B cell (primary cell): ENCODE measurements at regions of chr7 and their contacts with region 1.

Region 1: GRCh38 chr7:24819916-24820689 is 62.8 kb upstream of the GSDME start:
- DNase-seq: peak; percentile 88
- ATAC-seq: peak; percentile 56
- H3K4me3 ChIP-seq: peak overlapping the region in 1 of 5 experiments; percentile 17
- H3K4me3 Mint-ChIP-seq: peak overlapping the region; percentile 83
- H3K27ac ChIP-seq: peak overlapping the region; percentile 76 to 83
- H3K27ac Mint-ChIP-seq: peak overlapping the region; percentile 94
- H3K4me1 ChIP-seq: peaks cover 27% of the 10 kb centered on the region in 2 donors
- H3K4me1 Mint-ChIP-seq: peaks cover 40% of the 10 kb centered on the region
- H3K27me3 ChIP-seq: no peaks in the 10 kb centered on the region
- H3K27me3 Mint-ChIP-seq: no peaks in the 10 kb centered on the region
- CTCF ChIP-seq: peak; percentile 93

Region 2: DNA sequence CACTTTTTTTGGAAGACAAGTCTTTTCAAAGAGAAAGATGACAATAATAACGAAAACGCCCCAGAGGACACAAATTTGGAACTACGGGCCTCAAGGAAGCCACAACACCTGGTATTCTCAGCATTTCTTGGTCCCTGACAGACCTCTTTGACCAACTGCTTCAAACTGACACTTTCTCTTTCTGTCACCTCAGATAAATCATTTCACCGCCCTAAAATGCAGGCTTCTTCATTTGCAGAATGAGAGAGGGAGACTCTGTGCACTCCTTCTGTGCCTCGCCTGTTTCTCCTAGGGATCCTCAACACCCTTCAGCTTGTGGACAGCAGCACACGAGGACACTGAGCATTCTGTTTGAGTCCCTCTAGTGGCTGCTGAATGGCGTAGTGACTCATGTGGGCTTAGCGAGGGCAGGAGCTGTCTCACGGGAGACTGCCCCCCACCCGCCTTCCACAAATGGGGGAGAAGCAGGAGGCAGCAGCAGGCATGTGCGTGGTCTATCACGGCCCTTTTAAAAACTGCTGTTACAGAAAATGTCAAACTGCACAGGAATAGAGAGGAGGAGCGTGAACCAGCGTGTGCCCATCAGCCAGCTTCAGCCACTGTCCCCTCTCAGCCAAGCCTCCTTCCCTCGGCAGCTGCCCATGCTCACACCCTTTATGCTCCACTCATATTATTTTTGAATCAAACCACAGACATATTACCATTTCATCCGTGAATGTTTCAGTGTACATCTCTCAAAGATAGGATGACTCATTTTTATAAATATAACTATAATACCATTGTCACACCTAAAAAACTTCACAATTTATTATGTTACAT is 104.2 kb before region 1 on chr7:
- CTCF ChIA-PET with region 1: no interaction called
- POLR2A ChIA-PET with region 1: interaction called, 7 read pairs
- intact Hi-C with region 1: loop called (anchors 1 kb)
- DNase-seq: peak; percentile 56
- ATAC-seq: no peak
- H3K4me3 ChIP-seq: peak overlapping the region in 1 of 5 experiments; percentile 9
- H3K4me3 Mint-ChIP-seq: peak overlapping the region; percentile 68
- H3K27ac ChIP-seq: no peak overlapping the region
- H3K27ac Mint-ChIP-seq: no peak overlapping the region
- H3K4me1 ChIP-seq: peaks cover 52 to 55% of the 10 kb centered on the region in 2 donors
- H3K4me1 Mint-ChIP-seq: peaks cover 61% of the 10 kb centered on the region
- H3K27me3 ChIP-seq: no peaks in the 10 kb centered on the region
- H3K27me3 Mint-ChIP-seq: no peaks in the 10 kb centered on the region
- CTCF ChIP-seq: peak; percentile 56

Region 3: DNA sequence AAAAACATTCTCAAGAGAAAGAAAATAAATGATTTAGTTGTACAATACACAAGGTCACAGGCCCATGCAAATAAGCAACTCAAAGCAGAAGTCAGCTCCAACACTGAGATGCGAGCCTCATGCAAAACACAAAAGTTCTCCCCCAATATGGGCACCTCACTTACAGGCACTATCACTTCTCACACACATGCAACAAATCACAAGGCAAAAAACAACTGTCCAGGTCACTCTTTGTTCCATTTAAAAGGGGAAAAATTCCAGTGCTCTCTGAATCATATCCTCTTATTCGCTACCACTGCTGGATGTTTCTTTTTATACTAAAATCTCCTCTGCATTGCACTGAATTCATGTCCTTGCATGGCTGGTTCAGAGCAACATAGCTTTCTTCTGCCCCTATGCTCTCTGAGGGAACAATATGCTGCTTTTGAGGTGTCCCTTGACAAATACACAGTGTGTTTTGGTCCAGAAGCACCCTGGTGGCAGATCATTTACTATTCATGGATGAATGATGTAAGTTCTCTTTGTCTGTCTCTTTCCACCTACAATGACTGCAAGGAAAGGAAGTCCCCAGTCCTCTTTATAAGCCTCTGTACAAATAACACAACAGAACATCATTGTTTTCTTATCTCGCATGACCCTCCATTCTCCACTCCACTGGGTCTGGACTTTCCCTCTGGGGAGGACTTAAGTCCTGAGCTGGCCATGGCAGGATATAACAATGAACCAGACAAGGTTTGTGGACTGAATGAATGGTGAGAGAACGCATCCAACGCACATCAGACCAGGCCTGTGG is 22.5 kb after region 1 on chr7:
- CTCF ChIA-PET with region 1: interaction called, 129 read pairs
- POLR2A ChIA-PET with region 1: interaction called, 17 read pairs
- intact Hi-C with region 1: no loop called
- DNase-seq: peak; percentile 72
- ATAC-seq: peak; percentile 78
- H3K4me3 ChIP-seq: peak overlapping the region in 1 of 5 experiments; percentile 15
- H3K4me3 Mint-ChIP-seq: peak overlapping the region; percentile 59
- H3K27ac ChIP-seq: peak overlapping the region; percentile 68 to 90
- H3K27ac Mint-ChIP-seq: peak overlapping the region; percentile 85
- H3K4me1 ChIP-seq: peaks cover 55 to 58% of the 10 kb centered on the region in 2 donors
- H3K4me1 Mint-ChIP-seq: peaks cover 53% of the 10 kb centered on the region
- H3K27me3 ChIP-seq: no peaks in the 10 kb centered on the region
- H3K27me3 Mint-ChIP-seq: no peaks in the 10 kb centered on the region
- CTCF ChIP-seq: no peak

Region 4: DNA sequence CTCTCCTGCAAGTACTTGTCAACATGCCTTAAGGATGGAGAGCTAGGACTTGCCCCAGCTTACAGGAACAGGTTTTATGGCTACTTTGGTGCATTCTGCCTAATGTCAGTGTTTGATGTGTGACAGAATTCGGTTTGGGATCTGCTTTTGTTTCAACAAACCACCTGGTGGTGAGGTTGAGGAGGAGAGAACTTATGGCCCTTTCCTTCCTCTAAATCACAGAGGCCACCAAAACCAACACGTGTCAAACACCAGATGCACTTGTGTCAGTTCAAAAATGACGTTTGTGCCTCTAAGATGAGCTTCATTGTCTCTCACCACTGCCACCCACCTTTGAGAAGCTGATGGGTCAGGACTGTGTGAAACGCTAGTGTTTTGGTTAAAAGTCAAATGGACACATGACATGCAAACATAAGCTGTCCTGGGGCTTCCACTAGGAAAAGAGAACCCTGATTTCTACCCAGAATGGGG is 76.0 kb after region 1 on chr7:
- CTCF ChIA-PET with region 1: interaction called, 26 read pairs
- POLR2A ChIA-PET with region 1: interaction called, 4 read pairs
- intact Hi-C with region 1: loop called (anchors 1 kb)
- DNase-seq: peak; percentile 69
- ATAC-seq: peak; percentile 90
- H3K4me3 ChIP-seq: no peak overlapping the region
- H3K4me3 Mint-ChIP-seq: no peak overlapping the region
- H3K27ac ChIP-seq: peak overlapping the region in 1 of 2 donors; percentile 51
- H3K27ac Mint-ChIP-seq: peak overlapping the region; percentile 76
- H3K4me1 ChIP-seq: peaks cover 33 to 36% of the 10 kb centered on the region in 2 donors
- H3K4me1 Mint-ChIP-seq: peaks cover 55% of the 10 kb centered on the region
- H3K27me3 ChIP-seq: no peaks in the 10 kb centered on the region
- H3K27me3 Mint-ChIP-seq: no peaks in the 10 kb centered on the region
- CTCF ChIP-seq: peak; percentile 22

Region 5: GRCh38 chr7:25069900-25070443 is 249.9 kb after region 1 on chr7:
- CTCF ChIA-PET with region 1: interaction called, 246 read pairs
- POLR2A ChIA-PET with region 1: interaction called, 6 read pairs
- intact Hi-C with region 1: loop called (anchors 1 kb)
- DNase-seq: peak; percentile 76
- ATAC-seq: peak; percentile 51
- H3K4me3 ChIP-seq: no peak overlapping the region
- H3K4me3 Mint-ChIP-seq: no peak overlapping the region
- H3K27ac ChIP-seq: no peak overlapping the region
- H3K27ac Mint-ChIP-seq: no peak overlapping the region
- H3K4me1 ChIP-seq: peaks cover 0 to 2% of the 10 kb centered on the region in 2 donors
- H3K4me1 Mint-ChIP-seq: peaks cover 2% of the 10 kb centered on the region
- H3K27me3 ChIP-seq: no peaks in the 10 kb centered on the region
- H3K27me3 Mint-ChIP-seq: no peaks in the 10 kb centered on the region
- CTCF ChIP-seq: peak; percentile 95

Region 6: DNA sequence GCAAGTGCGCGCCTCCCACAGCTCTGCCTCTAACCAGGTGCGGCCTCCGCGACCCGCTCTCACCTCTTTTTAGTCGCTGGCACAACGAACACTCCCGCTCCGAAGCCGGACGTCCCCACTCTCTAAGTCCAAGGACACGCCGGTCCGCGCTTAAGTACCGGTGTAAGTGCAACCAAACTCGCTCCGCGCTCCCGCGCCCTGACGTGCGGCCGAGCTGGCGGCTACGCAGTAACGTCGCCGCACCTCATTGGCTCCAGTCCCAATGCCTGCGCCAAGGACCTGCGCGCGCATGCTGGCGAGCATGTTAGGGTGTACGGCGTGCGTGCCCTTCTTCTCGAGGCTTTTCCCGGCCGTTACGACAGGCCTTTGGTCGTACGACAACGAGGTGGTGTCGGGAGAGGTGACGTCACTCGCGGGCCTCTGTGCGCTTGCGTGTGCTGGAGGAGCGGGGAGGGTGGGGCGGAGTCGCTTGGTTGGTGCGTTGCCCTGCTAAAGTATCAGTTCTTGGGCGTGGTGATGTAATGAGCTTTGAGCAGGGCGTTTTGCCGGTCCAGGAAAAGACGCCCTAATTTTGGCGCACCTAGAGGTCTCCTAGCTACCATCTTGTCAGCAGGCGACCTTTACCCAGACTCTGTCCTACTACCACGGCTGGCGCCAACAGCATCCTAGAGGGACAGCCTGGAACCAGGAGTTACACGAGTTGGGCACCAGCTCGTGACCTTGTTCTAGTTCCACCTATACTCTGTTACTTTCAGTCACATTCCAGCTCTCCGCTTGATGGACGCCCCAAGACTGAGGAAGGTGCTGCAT is 305.2 kb after region 1 on chr7 and contains the start of gene CYCS:
- CTCF ChIA-PET with region 1: no interaction called
- POLR2A ChIA-PET with region 1: no interaction called
- intact Hi-C with region 1: loop called (anchors 1 kb)
- DNase-seq: peak; percentile 100
- ATAC-seq: peak; percentile 91
- H3K4me3 ChIP-seq: peak within 1 kb of the TSS; percentile 57 to 94 (median 86)
- H3K4me3 Mint-ChIP-seq: peak within 1 kb of the TSS; percentile 100
- H3K27ac ChIP-seq: peak within 1 kb of the TSS; percentile 96 to 99
- H3K27ac Mint-ChIP-seq: peak within 1 kb of the TSS; percentile 99
- H3K4me1 ChIP-seq: peaks cover 13 to 15% of the 10 kb centered on the region in 2 donors
- H3K4me1 Mint-ChIP-seq: peaks cover 27% of the 10 kb centered on the region
- H3K27me3 ChIP-seq: no peaks in the 10 kb centered on the region
- H3K27me3 Mint-ChIP-seq: no peaks in the 10 kb centered on the region
- CTCF ChIP-seq: no peak
- total RNA-seq, gene CYCS: 48.8 and 51.3 TPM in 2 replicates